Breast epithelium (tissue), 4 donors: ENCODE measurements at regions of chr12 and their contacts with region 1.

Region 1: GRCh38 chr12:130709971-130710732 is 5.9 kb downstream of the RIMBP2 start:
- DNase-seq: no peak
- H3K4me3 ChIP-seq: no peak overlapping the region
- H3K27ac ChIP-seq: no peak overlapping the region
- H3K4me1 ChIP-seq: no peaks in the 10 kb centered on the region
- H3K27me3 ChIP-seq: peaks cover 0 to 21% of the 10 kb centered on the region in 2 donors
- CTCF ChIP-seq: no peak
- POLR2A ChIP-seq: no peak

Region 2: DNA sequence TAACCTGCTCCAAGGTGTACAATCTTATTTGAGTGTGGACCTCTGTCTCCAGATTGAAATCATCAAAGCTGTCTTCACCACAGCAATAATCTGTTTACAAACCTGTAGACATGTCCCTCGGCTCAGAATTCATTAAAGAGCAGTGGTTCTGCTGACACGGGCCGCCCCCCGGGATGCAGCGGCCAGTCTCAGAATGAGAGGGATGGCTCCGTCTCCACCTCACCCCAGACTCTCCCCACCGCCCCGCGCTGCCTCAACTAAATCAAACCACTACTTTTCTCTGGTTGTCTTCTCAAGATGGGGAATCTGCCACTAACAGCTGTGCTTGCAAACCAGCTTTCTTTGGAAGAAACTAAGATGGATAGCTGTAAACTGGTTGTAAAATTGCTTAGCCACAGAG is 1942.6 kb before region 1 on chr12:
- intact Hi-C with region 1: loop called (anchors 5 kb)
- DNase-seq: no peak
- H3K4me3 ChIP-seq: no peak overlapping the region
- H3K27ac ChIP-seq: no peak overlapping the region
- H3K4me1 ChIP-seq: no peaks in the 10 kb centered on the region
- H3K27me3 ChIP-seq: peaks cover 0 to 28% of the 10 kb centered on the region in 2 donors
- CTCF ChIP-seq: no peak
- POLR2A ChIP-seq: no peak